Activated B cell treated with CpG ODN at 0.5 μM for 24 hours (primary cell): ENCODE measurements at regions of chr11 and their contacts with region 1.

Region 1: GRCh38 chr11:124837491-124837856 is 27.8 kb upstream of the ROBO3 start:
- DNase-seq: no peak
- ATAC-seq: no peak
- H3K4me3 Mint-ChIP-seq: no peak overlapping the region
- H3K27ac Mint-ChIP-seq: no peak overlapping the region
- H3K4me1 Mint-ChIP-seq: peaks cover 16% of the 10 kb centered on the region
- H3K27me3 Mint-ChIP-seq: peaks cover 47% of the 10 kb centered on the region
- CTCF ChIP-seq: no peak

Region 2: DNA sequence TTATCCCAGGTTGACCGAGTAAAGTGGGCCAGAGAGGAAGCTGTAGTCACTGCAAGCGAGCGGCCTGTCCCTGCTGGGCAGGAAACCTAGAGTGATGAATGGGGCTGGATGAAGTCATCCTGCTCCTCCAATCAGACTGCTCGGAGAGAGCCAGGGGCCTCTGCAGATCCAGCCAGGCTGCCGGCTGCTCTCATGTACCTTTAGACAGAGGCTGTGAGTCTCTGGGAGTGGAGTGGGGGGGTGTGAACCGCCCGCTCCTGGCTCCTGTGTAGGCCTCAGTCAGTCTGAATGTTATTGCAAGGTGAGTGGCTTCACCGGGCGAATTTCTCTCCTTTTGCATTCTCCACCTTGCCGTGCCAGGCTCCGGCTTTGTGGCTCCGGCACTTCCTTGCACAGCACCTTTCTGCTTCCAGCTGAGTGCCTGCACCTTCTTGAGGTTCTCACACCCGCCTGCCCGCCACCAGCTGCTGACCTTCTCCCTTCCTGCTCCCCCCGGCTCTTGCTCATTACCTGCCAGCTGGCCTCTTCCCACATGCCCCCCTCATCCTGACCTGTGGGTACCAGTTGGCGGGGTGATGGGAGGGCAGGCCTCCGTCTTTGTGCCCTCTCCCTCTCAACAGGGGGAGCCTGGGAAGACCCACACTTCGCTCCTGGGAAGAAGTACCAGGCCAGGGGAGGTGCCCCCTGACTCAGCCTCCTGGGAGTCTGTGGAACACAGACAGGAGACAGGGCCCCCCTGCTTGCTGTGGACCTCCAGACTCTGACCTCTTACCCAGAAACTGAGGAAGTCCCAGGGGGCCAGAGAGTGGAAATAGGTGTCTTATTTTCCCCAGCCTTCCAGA is 1327.5 kb before region 1 on chr11:
- CTCF ChIA-PET with region 1: no interaction called
- POLR2A ChIA-PET with region 1: no interaction called
- intact Hi-C with region 1: no loop called
- DNase-seq: no peak
- ATAC-seq: no peak
- H3K4me3 Mint-ChIP-seq: no peak overlapping the region
- H3K27ac Mint-ChIP-seq: no peak overlapping the region
- H3K4me1 Mint-ChIP-seq: peaks cover 10% of the 10 kb centered on the region
- H3K27me3 Mint-ChIP-seq: no peaks in the 10 kb centered on the region
- CTCF ChIP-seq: no peak

Region 3: DNA sequence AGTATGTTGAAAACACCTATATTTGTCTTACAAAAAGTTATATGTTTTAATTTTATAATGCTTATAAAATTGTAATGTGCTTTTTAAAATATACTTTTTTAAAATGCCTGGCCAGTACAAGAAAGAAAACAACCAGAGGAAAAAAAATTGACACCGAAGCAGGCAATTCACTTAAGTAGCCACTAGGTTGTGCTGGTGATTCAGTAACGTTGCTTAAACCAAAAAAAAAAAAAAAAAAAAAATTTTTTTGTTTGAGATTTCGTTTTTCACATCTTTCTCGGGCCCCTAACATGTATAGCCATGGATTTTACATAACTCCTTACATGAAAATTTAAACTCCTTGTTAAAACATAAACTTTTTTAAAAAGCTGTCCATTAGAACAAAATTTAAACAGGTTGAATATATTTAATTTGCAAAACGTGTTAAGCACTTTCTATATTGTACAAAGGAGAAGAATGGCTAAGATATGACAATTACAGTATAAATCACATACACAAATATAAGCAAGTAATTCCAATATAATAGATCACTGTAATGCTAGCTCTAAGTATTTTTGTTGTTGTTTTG is 422.0 kb before region 1 on chr11:
- CTCF ChIA-PET with region 1: no interaction called
- POLR2A ChIA-PET with region 1: no interaction called
- intact Hi-C with region 1: loop called (anchors 1 kb)
- DNase-seq: no peak
- ATAC-seq: no peak
- H3K4me3 Mint-ChIP-seq: no peak overlapping the region
- H3K27ac Mint-ChIP-seq: no peak overlapping the region
- H3K4me1 Mint-ChIP-seq: no peaks in the 10 kb centered on the region
- H3K27me3 Mint-ChIP-seq: peaks cover 15% of the 10 kb centered on the region
- CTCF ChIP-seq: no peak

Region 4: GRCh38 chr11:124644426-124645280 is 192.8 kb before region 1 on chr11:
- CTCF ChIA-PET with region 1: interaction called, 17 read pairs
- POLR2A ChIA-PET with region 1: no interaction called
- intact Hi-C with region 1: loop called (anchors 1 kb)
- DNase-seq: no peak
- ATAC-seq: peak; percentile 79
- H3K4me3 Mint-ChIP-seq: no peak overlapping the region
- H3K27ac Mint-ChIP-seq: no peak overlapping the region
- H3K4me1 Mint-ChIP-seq: peaks cover 18% of the 10 kb centered on the region
- H3K27me3 Mint-ChIP-seq: no peaks in the 10 kb centered on the region
- CTCF ChIP-seq: peak; percentile 87

Region 5: DNA sequence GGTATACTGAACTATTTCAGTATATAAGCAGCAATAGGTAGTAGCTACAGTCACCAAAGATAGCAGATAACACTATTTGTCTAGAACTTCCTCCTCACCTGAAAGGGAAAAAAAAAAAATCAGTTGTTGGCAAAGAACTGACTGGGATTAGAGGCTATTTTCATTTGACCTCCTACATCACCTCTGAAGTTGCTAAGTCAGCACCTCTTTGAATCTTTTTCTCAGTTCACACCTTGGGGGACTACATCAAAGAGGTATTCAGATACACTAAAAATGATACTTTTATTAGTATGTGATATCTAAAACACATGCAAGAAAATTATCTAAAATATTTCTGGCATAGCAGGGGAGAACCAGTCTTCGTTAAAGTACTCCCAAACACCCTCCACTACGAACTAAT is 53.4 kb before region 1 on chr11:
- CTCF ChIA-PET with region 1: no interaction called
- POLR2A ChIA-PET with region 1: no interaction called
- intact Hi-C with region 1: no loop called
- DNase-seq: no peak
- ATAC-seq: no peak
- H3K4me3 Mint-ChIP-seq: no peak overlapping the region
- H3K27ac Mint-ChIP-seq: no peak overlapping the region
- H3K4me1 Mint-ChIP-seq: no peaks in the 10 kb centered on the region
- H3K27me3 Mint-ChIP-seq: no peaks in the 10 kb centered on the region
- CTCF ChIP-seq: no peak

Region 6: DNA sequence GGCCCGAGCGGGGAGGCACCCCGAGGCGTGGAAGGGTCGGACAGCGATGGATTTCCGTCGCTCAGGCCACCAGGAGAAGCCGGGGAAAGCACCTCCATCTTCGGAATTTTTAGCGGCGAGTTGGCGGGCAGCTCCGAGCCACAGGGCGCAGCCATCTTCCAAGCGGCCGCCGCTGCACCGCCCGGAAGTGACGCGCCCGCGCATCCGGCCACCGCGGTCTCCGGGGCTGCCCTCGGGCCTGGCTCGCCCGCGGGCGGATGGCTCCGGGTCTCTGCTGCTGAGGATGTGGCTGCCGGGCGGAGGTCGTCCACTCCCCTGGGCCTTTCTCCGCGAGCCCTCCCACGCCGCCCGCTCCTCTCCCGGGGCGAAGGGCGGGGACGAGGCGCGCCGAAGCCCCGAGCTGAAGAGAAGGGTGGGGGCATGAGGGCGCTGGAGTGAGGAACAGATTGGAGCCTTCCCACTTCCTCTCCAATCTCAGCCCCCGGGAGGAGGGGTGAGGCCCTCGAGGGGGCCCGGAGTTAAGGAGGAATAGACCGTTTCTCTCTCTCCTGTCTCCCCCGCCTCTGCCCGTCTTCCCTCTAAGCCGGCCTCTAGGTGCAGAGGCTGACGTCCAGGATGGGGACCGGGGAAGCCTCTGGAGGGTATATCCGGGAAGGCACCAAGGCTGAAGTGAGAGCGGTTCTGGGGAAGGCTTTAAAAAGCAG is 37.1 kb before region 1 on chr11 and contains the start of gene MSANTD2:
- CTCF ChIA-PET with region 1: interaction called, 5 read pairs
- POLR2A ChIA-PET with region 1: interaction called, 3 read pairs
- intact Hi-C with region 1: loop called (anchors 2 kb)
- DNase-seq: peak; percentile 85
- ATAC-seq: peak; percentile 84
- H3K4me3 Mint-ChIP-seq: peak within 1 kb of the TSS; percentile 92
- H3K27ac Mint-ChIP-seq: peak within 1 kb of the TSS; percentile 92
- H3K4me1 Mint-ChIP-seq: peaks cover 26% of the 10 kb centered on the region
- H3K27me3 Mint-ChIP-seq: no peaks in the 10 kb centered on the region
- CTCF ChIP-seq: no peak
- total RNA-seq, gene MSANTD2: 17.7 and 21.0 TPM in 2 replicates

Region 7: DNA sequence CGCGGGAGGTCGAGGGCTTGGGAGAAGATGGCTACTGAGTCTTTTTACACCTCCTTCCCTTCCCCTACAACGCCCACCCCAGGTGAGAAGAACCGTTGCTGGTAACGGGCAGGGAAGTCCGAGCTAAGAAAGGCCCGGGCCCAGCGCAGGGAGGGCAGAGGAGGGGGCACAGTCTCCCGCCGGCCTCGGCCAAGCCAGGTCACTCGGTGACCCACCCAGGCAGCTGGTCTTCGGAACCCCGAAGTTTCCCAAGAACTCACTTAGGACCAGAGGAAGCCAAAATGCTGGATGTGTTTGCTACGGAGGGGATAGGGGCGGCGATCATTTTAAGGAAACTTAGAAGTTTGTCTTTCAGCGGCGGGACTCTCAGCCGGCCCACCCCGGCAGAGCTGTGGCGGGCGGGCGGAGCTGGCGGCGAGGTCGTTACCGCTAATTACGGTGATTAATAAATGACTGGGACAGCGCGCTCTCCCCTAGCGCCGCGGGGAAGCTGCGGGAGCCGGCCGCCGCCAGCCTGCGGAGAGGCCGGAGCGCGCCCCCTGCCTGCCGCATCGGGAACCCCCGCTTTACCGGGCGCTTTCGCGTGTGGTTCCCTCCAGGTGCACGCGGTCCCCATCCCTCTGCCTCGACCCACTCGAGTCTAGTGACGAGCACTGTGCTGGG is 28.6 kb after region 1 on chr11:
- CTCF ChIA-PET with region 1: interaction called, 4 read pairs
- POLR2A ChIA-PET with region 1: no interaction called
- intact Hi-C with region 1: loop called (anchors 2 kb)
- DNase-seq: peak; percentile 43
- ATAC-seq: peak; percentile 28
- H3K4me3 Mint-ChIP-seq: no peak overlapping the region
- H3K27ac Mint-ChIP-seq: no peak overlapping the region
- H3K4me1 Mint-ChIP-seq: peaks cover 30% of the 10 kb centered on the region
- H3K27me3 Mint-ChIP-seq: peaks cover 85% of the 10 kb centered on the region
- CTCF ChIP-seq: no peak